ENCODE measurements at regions of chr15 and their contacts with region 1.

Region 1: DNA sequence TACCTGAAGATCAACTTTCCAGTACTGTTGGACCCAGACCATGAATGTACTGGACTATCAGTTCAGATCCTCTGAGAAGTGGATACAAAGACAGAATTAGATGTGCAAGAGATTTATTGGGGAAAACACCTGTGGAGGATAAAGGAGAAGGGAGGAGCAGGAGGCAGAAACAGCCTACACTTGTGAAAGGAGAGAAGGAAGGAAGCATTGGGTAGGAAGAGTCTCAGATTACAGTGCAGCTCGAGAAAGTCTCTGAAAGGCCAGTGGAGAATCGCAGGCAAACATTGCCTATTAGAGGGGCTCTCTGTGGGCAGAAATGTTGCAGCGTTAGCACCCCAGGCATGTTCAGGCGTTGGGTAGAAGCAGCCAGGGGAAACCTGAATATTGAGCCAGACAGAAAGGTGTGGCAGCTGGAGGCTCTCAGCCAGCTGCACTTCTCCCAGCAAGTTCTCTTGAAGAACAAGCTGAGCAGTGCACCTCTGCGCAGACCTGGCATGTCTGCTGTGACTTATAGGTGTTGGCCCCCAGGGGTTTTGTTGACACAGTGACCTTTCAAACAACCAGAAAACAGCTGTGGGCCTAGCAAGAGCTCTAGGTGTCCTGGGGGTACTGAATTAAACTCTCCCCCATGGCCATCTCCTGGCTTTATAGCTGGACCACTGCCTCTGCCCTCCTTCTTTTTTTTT is 7.0 kb downstream of the CHST14 start:
- DNase-seq: no peak
- ATAC-seq: no peak
- H3K4me3 ChIP-seq: no peak overlapping the region
- H3K4me3 Mint-ChIP-seq: no peak overlapping the region
- H3K27ac ChIP-seq: no peak overlapping the region
- H3K27ac Mint-ChIP-seq: no peak overlapping the region
- H3K4me1 ChIP-seq: no peaks in the 10 kb centered on the region
- H3K4me1 Mint-ChIP-seq: peaks cover 2% of the 10 kb centered on the region
- H3K27me3 ChIP-seq: peaks cover 0 to 4% (median 2%) of the 10 kb centered on the region in 4 experiments
- H3K27me3 Mint-ChIP-seq: peaks cover 22% of the 10 kb centered on the region
- CTCF ChIP-seq: no peak

Region 2: GRCh38 chr15:40392986-40393948 is 84.5 kb before region 1 on chr15:
- CTCF ChIA-PET with region 1: no interaction called
- POLR2A ChIA-PET with region 1: interaction called, 11 read pairs
- intact Hi-C with region 1: no loop called
- DNase-seq: no peak
- ATAC-seq: no peak
- H3K4me3 ChIP-seq: no peak overlapping the region
- H3K4me3 Mint-ChIP-seq: no peak overlapping the region
- H3K27ac ChIP-seq: no peak overlapping the region
- H3K27ac Mint-ChIP-seq: no peak overlapping the region
- H3K4me1 ChIP-seq: peaks cover 6 to 10% of the 10 kb centered on the region in 2 donors
- H3K4me1 Mint-ChIP-seq: peaks cover 8% of the 10 kb centered on the region
- H3K27me3 ChIP-seq: no peaks in the 10 kb centered on the region
- H3K27me3 Mint-ChIP-seq: no peaks in the 10 kb centered on the region
- CTCF ChIP-seq: no peak

Region 3: DNA sequence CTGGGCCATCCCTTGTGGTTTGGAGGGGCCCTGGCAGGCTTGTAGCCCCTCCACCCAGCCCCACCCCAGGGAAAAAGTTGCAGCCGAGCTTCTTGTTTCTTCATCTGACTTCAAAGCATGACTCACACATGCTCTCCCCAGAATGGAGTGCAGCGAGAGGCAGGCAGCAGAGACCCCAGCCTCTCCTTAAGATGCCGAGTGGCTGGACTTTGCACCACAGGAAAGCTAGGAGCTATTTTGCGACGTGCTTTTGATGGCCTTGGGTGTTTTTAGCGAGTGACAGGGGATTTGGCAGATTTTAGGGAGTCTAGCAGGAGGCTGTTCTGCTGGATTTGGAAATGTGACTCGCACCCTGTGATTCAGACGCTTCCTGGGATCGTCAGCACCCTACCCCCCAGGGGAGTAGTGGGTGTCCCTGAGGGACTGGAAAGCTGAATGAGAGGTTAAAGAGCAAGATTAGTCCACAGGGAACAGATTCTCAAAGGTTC is 22.8 kb before region 1 on chr15:
- CTCF ChIA-PET with region 1: no interaction called
- POLR2A ChIA-PET with region 1: no interaction called
- intact Hi-C with region 1: no loop called
- DNase-seq: no peak
- ATAC-seq: no peak
- H3K4me3 ChIP-seq: no peak overlapping the region
- H3K4me3 Mint-ChIP-seq: no peak overlapping the region
- H3K27ac ChIP-seq: no peak overlapping the region
- H3K27ac Mint-ChIP-seq: peak overlapping the region; percentile 15
- H3K4me1 ChIP-seq: peaks cover 31 to 39% of the 10 kb centered on the region in 2 donors
- H3K4me1 Mint-ChIP-seq: peaks cover 54% of the 10 kb centered on the region
- H3K27me3 ChIP-seq: no peaks in the 10 kb centered on the region
- H3K27me3 Mint-ChIP-seq: no peaks in the 10 kb centered on the region
- CTCF ChIP-seq: no peak

Region 4: DNA sequence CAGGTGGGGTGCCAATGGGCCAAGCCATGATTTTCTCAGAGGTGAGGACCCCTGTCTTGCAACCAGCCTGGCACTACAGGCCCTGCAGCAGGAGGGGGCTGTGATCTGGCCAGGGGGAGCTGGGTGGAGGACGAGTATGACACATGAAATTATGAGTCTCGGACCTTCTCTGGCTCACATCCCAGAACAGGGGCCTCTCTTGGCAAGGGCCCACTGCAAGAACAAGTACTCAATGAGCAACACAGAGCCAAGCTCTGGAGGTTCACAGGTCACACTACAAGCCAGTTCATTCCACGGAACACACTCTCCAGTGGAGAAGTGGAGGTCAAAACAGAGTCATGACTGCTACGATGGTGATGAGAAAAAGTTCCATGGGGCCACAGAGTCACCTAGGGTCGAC is 58.7 kb after region 1 on chr15:
- CTCF ChIA-PET with region 1: no interaction called
- POLR2A ChIA-PET with region 1: no interaction called
- intact Hi-C with region 1: no loop called
- DNase-seq: no peak
- ATAC-seq: no peak
- H3K4me3 ChIP-seq: no peak overlapping the region
- H3K4me3 Mint-ChIP-seq: no peak overlapping the region
- H3K27ac ChIP-seq: no peak overlapping the region
- H3K27ac Mint-ChIP-seq: no peak overlapping the region
- H3K4me1 ChIP-seq: peaks cover 8 to 11% of the 10 kb centered on the region in 2 donors
- H3K4me1 Mint-ChIP-seq: peaks cover 17% of the 10 kb centered on the region
- H3K27me3 ChIP-seq: no peaks in the 10 kb centered on the region
- H3K27me3 Mint-ChIP-seq: no peaks in the 10 kb centered on the region
- CTCF ChIP-seq: no peak